ENCODE measurements at regions of chr14 and their contacts with region 1.

Region 1: DNA sequence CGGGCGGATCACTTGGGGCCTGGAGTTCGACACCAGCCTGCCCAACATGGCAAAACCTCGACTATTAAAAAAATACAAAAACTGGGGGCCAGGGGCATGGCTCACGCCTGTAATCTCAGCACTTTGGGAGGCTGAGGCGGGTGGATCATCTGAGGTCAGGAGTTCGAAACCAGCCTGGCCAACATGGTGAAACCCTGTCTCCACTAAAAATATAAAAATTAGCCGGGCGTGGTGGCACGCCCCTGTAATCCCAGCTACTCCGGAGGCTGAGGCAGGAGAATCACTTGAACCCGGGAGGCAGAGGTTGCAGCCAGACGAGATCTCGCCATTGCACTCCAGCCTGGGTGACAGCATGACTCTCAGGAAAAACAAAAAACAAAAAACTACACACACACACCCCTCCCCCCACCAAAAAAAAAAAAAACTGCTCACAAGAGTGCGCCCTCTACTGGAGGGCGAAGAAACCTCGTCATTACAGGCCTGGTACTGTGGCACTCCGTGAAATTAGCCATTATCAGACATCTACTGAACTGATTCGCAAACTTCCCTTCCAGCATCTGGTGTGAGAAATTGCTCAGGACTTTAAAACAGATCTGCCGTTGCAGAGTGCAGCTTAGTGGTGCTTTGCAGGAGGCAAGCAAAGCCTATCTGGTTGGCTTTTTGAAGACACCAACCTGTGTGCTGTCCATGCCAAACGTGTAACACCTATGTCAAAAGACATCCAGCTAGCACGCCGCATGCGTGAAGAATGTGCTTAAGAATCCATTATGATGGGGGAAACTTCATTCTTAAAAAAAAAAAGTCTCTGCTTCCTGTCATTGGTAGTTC is 7.7 kb downstream of the PPP1R3E start:
- DNase-seq: peak; percentile 32 to 58
- ATAC-seq: peak; percentile 71 to 86 (median 77)
- H3K4me3 ChIP-seq: peak overlapping the region; percentile 38
- H3K27ac ChIP-seq: no peak overlapping the region
- H3K4me1 ChIP-seq: peaks cover 24% of the 10 kb centered on the region
- H3K27me3 ChIP-seq: no peaks in the 10 kb centered on the region
- CTCF ChIP-seq: peak; percentile 79

Region 2: GRCh38 chr14:23258256-23258655 is 36.7 kb before region 1 on chr14:
- intact Hi-C with region 1: loop called (anchors 5 kb)
- DNase-seq: no peak
- ATAC-seq: no peak
- H3K4me3 ChIP-seq: no peak overlapping the region
- H3K27ac ChIP-seq: no peak overlapping the region
- H3K4me1 ChIP-seq: no peaks in the 10 kb centered on the region
- H3K27me3 ChIP-seq: peaks cover 0 to 30% (median 2%) of the 10 kb centered on the region in 3 donors
- CTCF ChIP-seq: no peak